Esophagus squamous epithelium (tissue), 5 donors: ENCODE measurements at regions of chr9 and their contacts with region 1.

Region 1: DNA sequence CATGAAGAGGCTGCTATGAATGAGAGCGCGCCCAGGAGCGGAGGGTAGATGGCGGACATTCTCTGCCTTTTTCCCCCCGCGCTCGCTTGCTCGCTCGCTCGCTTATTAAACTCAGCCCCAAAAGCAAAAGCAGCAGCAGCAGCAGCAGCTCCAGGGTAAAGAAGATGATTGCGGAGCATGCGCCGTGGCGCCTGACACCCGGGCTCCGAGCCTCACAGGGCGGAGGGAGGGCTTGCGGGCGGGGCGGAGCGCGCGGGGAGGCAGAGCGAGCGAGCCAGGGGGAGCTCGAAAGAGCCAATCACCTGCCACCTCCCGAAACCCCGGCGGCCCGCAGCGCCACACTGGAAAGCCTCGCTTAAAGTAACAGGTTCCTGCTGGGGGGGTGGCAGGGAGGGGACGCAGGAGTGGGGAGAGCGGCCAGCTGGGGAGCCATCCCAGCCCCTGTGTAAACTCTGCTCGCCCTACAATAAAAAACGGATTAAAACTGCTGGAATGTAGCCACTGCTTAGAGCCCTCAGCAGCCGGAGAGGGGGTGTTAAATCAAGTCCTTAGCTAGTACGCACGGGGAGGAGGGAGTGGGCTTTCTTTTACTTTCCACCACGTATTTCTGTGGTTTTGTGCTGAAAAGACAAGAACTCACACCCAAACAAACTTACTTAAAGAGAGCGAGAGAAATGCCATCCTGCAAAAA is at the start of gene MLLT3:
- DNase-seq: peak; percentile 64
- H3K4me3 ChIP-seq: peak within 1 kb of the TSS; percentile 90 to 97 (median 96)
- H3K27ac ChIP-seq: peak within 1 kb of the TSS; percentile 80 to 96 (median 94)
- H3K4me1 ChIP-seq: peaks cover 11 to 53% (median 17%) of the 10 kb centered on the region in 3 donors
- H3K27me3 ChIP-seq: no peaks in the 10 kb centered on the region
- CTCF ChIP-seq: peak in 2 of 6 experiments; percentile 11 to 36
- POLR2A ChIP-seq: peak in 2 of 4 donors; percentile 45 to 77
- total RNA-seq, gene MLLT3: 8.2 to 21.5 (median 8.6) TPM

Region 2: GRCh38 chr9:20356403-20357035 is 266.0 kb before region 1 on chr9:
- intact Hi-C with region 1: loop called (anchors 10 kb)
- DNase-seq: no peak
- H3K4me3 ChIP-seq: peak overlapping the region in 3 of 4 donors; percentile 1 to 42 (median 24)
- H3K27ac ChIP-seq: peak overlapping the region; percentile 33 to 78 (median 56)
- H3K4me1 ChIP-seq: peaks cover 4 to 52% (median 24%) of the 10 kb centered on the region in 3 donors
- H3K27me3 ChIP-seq: no peaks in the 10 kb centered on the region
- CTCF ChIP-seq: peak in 5 of 6 experiments; percentile 48 to 73 (median 59)
- POLR2A ChIP-seq: no peak

Region 3: DNA sequence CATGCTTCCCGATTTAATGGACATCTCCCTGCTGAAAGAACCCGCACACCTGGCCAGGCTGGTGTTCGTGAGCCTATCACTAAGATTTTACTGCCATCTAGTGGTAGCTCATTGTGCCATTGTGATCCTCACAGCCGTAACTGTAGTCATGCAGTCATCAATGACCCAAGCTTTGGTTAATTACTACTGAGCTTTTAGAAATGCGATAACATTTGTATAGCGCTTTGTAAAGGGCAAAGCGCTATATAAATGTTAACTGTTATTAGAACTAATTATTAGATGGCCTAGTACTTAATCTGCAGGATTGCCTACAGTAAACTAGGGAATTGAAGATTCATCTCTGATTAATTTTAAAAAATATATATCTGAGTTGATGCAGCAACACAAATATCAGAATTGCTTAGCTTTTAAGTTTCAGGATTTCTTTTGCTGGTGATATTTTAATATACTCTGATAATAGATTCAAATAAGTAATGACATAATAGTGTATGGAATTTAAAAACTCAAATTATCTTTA is 318.8 kb after region 1 on chr9:
- intact Hi-C with region 1: loop called (anchors 5 kb)
- DNase-seq: no peak
- H3K4me3 ChIP-seq: no peak overlapping the region
- H3K27ac ChIP-seq: no peak overlapping the region
- H3K4me1 ChIP-seq: peaks cover 0 to 6% (median 0%) of the 10 kb centered on the region in 3 donors
- H3K27me3 ChIP-seq: no peaks in the 10 kb centered on the region
- CTCF ChIP-seq: peak; percentile 67 to 87 (median 81)
- POLR2A ChIP-seq: no peak